Activated CD4-positive, alpha-beta T cell treated with anti-CD3 and anti-CD28 coated beads for 36 hours (primary cell): ENCODE measurements at regions of chr18 and their contacts with region 1.

Region 1: GRCh38 chr18:10424585-10425307 is 29.7 kb upstream of the APCDD1 start:
- DNase-seq: no peak
- ATAC-seq: no peak
- H3K4me3 Mint-ChIP-seq: no peak overlapping the region
- H3K27ac Mint-ChIP-seq: no peak overlapping the region
- H3K4me1 Mint-ChIP-seq: no peaks in the 10 kb centered on the region
- H3K27me3 Mint-ChIP-seq: peaks cover 6% of the 10 kb centered on the region

Region 2: DNA sequence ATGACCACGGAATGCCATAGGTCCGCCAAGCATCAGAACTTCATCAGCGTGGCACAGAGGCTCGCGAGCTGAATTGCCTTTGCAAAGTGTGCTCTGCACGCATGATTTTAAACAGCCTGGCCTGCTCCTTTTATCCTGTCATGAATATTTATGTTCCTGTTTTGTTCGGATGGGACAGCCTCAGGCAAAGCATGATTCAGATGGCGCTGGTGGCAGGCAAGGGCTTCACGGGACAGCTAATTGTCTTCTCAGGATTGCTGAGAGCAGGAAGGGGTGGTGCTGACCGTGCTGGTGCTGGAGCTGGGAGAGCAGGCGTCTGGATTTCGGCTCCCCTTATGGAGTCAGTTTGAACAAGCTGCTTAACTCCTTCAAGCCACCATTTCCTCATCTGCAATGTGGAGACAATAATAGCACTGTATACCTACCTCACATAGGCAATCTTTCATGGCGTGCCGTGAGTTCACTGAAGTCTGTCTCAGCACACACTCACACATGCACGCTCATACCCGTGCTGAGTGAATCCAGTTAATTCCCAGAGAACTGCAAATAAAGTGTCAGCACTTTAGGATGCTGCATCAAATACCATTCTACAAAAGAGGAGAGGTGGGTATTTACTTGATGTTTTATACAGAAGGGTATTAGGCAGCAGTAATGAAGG is 50.0 kb before region 1 on chr18:
- CTCF ChIA-PET with region 1: no interaction called
- POLR2A ChIA-PET with region 1: no interaction called
- intact Hi-C with region 1: loop called in 1 of 2 experiments (anchors 1 kb)
- DNase-seq: no peak
- ATAC-seq: no peak
- H3K4me3 Mint-ChIP-seq: no peak overlapping the region
- H3K27ac Mint-ChIP-seq: no peak overlapping the region
- H3K4me1 Mint-ChIP-seq: no peaks in the 10 kb centered on the region
- H3K27me3 Mint-ChIP-seq: peaks cover 2% of the 10 kb centered on the region

Region 3: DNA sequence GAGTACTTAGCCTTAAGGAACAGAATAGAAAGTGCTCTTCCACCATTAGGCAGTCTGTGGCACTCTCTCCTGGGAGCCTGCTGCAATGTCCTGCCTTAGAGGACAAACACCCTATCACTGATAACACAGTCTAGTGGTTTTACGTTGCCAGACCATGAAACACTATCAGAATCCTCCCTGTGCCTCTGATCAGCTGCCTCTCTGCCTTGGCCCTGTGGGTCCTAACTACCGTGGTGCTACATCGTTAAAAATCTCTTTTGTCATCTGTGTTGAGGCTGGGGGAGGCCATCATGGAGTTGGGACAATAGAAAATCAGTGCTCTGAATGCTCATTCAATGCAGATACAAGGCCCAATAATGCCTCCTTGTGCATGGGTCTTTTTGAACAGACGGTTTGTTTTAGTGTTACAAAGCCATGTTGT is 17.8 kb after region 1 on chr18:
- CTCF ChIA-PET with region 1: no interaction called
- POLR2A ChIA-PET with region 1: no interaction called
- intact Hi-C with region 1: no loop called
- DNase-seq: no peak
- ATAC-seq: no peak
- H3K4me3 Mint-ChIP-seq: no peak overlapping the region
- H3K27ac Mint-ChIP-seq: no peak overlapping the region
- H3K4me1 Mint-ChIP-seq: no peaks in the 10 kb centered on the region
- H3K27me3 Mint-ChIP-seq: peaks cover 3% of the 10 kb centered on the region